ENCODE measurements at regions of chr5 and their contacts with region 1.

Region 1: DNA sequence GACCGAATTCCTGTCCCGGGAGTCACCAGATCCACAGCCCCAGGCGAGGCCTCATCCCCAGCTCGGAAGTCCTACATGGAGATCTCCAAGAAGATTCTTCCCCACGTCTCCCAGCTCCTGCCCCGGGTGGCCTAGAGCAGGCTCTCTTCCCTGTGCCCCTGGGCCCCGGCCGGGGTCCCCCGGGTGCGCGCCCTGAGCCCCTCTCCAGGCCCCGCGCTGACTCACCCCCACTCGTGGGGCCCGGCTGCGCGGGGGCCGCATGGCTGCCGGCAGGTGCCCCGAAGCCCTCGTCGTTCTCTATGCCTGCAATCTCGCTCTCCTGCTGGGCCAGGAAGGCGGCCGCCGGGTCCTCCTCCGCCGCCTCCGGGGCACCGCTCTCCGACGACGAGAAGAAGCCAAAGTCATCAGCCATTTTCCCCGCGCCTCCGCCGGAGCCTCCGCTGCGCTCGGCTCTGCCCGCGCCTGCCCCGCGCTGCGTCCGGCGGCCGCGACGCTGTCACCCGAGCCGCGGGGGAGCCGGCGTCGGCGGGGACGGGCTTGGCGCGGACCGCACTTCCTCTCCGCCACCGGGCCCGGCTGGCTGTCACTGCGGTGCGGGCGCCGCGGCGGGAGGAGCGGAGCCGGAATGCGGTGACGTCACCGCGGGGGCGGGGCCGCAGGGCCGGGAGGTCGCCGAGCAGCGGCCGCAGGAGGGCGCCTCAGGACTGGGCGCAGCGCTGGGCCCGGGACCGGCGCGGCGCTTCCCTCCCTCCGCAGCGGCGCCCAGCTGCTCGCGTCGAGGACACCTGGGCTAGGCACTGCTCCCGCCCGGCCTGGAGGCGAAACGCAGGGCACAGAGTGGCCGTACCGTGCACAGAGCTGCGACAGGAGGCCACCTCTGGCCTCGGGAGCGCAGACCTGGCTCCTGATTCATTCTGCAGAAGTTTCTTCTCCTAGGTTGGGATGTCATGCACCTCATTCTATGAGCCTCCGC is at the start of gene CLTB:
- DNase-seq: peak; percentile 90
- ATAC-seq: peak; percentile 97
- H3K4me3 Mint-ChIP-seq: peak within 1 kb of the TSS; percentile 58
- H3K27ac Mint-ChIP-seq: no peak within 1 kb of the TSS
- H3K4me1 Mint-ChIP-seq: peaks cover 6% of the 10 kb centered on the region; the same call in 1 of the 2 replicates
- H3K27me3 Mint-ChIP-seq: peaks cover 39% of the 10 kb centered on the region
- CTCF ChIP-seq: no peak
- total RNA-seq, gene CLTB: 28.6 to 33.8 TPM (median 30.3 TPM) in 3 replicates

Region 2: DNA sequence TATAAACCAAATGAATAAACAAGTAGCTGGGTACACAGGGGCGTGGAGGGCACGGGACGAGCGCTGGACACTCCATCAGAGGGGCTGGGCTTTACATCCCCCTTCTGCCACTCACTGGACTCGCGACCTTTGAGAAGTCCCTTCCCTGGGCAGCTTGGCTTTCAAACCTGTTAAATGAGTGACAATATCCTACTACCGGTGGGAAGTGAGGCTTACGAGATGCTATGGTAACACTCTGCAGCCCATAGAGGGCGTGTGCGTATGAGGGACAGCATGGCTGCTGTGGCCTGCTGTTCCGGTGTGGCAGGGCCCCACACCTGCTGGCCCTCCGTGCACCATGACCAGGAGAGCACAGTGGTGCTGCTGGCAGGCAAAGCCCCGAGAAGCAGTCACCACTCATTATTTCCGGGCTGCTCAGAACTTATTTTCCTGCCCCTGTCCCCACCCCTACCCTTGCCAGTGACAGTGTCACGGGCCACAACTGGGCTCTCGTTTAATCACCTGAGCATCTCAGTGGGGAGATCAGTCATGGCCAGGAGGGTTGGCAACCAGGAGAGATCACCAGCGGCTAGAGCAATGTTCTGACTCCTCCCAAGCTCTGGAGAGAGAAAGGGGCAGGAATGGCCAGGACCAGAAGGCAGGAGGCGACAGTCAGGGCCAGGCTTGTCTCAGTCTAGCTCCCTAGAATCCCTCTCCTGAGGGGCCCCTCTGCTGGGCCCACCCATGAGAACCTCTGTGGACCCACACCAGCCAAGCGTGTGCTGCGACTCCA is 10.4 kb before region 1 on chr5:
- CTCF ChIA-PET with region 1: interaction called, 13 read pairs
- POLR2A ChIA-PET with region 1: no interaction called
- DNase-seq: peak; percentile 54
- ATAC-seq: peak; percentile 89
- H3K4me3 Mint-ChIP-seq: no peak overlapping the region
- H3K27ac Mint-ChIP-seq: peak overlapping the region; percentile 75
- H3K4me1 Mint-ChIP-seq: peaks cover 3% of the 10 kb centered on the region
- H3K27me3 Mint-ChIP-seq: no peaks in the 10 kb centered on the region
- CTCF ChIP-seq: no peak

Region 3: DNA sequence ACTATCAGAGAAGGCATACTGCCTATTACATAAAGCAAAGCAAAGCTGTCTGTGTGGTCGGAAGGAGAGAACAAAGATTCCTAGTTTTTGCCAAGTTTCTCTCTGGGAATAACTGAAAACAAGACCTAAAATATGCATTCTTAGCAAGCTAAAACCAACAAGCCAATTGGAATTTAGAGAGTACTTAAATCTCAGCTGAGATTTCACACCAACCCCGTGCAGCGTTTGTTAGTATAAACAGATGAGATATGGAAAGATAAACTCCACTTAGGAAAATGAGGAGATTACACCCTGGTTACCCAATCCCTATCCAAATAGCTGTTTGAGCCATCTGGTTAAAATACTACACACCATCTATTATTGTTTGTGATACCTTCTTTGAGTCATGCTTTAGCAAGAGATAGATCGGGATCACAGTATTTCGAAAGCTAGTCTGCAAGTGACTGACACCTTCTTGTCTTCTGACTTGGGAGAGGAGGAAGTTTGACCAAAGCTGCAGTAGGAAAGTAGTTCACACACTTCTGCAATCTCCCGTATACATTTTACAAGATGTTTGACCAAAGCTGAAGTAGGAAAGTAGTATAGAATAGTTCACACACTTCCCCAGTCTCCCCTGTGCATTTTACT is 50.1 kb after region 1 on chr5:
- CTCF ChIA-PET with region 1: no interaction called
- POLR2A ChIA-PET with region 1: no interaction called
- DNase-seq: no peak
- ATAC-seq: no peak
- H3K4me3 Mint-ChIP-seq: no peak overlapping the region
- H3K27ac Mint-ChIP-seq: no peak overlapping the region; the same call in 1 of the 2 replicates
- H3K4me1 Mint-ChIP-seq: peaks cover 2% of the 10 kb centered on the region; the same call in 1 of the 2 replicates
- H3K27me3 Mint-ChIP-seq: no peaks in the 10 kb centered on the region
- CTCF ChIP-seq: no peak

Region 4: DNA sequence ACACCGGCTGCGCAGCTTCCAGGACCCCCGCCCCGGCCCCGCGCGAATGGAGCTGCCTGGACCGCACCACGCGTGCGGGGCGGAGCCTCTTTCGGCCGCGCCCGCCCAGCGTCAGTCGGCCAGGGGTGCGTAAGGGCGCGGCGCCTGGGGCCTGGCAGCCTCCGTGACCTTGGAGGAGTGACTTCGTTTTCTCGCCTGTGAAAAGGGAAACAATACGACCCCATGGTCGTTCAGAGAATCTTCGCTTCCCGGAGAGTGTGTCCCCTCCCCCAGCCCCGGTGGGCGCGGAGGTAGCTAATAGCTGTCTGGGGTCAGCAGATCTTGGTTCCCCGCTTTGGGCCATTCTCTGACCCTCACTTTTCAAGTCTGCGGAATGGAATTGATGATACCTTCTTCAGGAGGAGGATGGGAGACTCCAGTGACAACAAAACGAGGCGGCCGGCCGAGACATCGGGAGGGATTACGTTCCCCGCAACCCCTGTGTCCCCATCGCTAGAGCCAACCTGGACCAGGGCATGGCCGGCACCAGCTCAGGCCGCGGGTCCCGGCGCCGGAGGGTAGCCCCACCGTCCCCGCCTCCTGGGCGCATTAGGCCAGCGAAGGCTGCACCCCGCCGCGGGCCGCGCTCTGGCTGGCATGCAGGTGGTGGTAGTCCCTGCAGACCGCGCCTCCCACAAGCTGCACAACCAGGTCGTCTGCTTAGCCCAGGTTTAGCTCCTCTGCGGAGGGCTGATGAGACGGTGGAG is 127.4 kb after region 1 on chr5:
- CTCF ChIA-PET with region 1: interaction called, 10 read pairs
- POLR2A ChIA-PET with region 1: no interaction called
- DNase-seq: peak; percentile 76
- ATAC-seq: peak; percentile 58
- H3K4me3 Mint-ChIP-seq: peak overlapping the region; percentile 91
- H3K27ac Mint-ChIP-seq: peak overlapping the region; percentile 97
- H3K4me1 Mint-ChIP-seq: peaks cover 48% of the 10 kb centered on the region
- H3K27me3 Mint-ChIP-seq: no peaks in the 10 kb centered on the region
- CTCF ChIP-seq: no peak

Measured in WTC11 (cell line).